ENCODE measurements at regions of chr5 and their contacts with region 1.

Region 1: GRCh38 chr5:39678548-39678947 is 253.8 kb upstream of the DAB2 start:
- DNase-seq: peak in 1 of 2 experiments; percentile 32
- H3K4me3 ChIP-seq: no peak overlapping the region
- H3K27ac ChIP-seq: peak overlapping the region; percentile 44
- H3K4me1 ChIP-seq: peaks cover 19% of the 10 kb centered on the region
- H3K27me3 ChIP-seq: no peaks in the 10 kb centered on the region
- CTCF ChIP-seq: no peak

Region 2: GRCh38 chr5:39624268-39624886 is 54.2 kb before region 1 on chr5:
- CTCF ChIA-PET with region 1: no interaction called
- POLR2A ChIA-PET with region 1: interaction called, 3 read pairs
- intact Hi-C with region 1: loop called (anchors 2 kb)
- DNase-seq: peak; percentile 87 to 96
- H3K4me3 ChIP-seq: peak overlapping the region; percentile 46
- H3K27ac ChIP-seq: peak overlapping the region; percentile 78
- H3K4me1 ChIP-seq: peaks cover 35% of the 10 kb centered on the region
- H3K27me3 ChIP-seq: no peaks in the 10 kb centered on the region
- CTCF ChIP-seq: no peak